Right lobe of liver (tissue), 6 donors: ENCODE measurements at regions of chr6 and their contacts with region 1.

Region 1: DNA sequence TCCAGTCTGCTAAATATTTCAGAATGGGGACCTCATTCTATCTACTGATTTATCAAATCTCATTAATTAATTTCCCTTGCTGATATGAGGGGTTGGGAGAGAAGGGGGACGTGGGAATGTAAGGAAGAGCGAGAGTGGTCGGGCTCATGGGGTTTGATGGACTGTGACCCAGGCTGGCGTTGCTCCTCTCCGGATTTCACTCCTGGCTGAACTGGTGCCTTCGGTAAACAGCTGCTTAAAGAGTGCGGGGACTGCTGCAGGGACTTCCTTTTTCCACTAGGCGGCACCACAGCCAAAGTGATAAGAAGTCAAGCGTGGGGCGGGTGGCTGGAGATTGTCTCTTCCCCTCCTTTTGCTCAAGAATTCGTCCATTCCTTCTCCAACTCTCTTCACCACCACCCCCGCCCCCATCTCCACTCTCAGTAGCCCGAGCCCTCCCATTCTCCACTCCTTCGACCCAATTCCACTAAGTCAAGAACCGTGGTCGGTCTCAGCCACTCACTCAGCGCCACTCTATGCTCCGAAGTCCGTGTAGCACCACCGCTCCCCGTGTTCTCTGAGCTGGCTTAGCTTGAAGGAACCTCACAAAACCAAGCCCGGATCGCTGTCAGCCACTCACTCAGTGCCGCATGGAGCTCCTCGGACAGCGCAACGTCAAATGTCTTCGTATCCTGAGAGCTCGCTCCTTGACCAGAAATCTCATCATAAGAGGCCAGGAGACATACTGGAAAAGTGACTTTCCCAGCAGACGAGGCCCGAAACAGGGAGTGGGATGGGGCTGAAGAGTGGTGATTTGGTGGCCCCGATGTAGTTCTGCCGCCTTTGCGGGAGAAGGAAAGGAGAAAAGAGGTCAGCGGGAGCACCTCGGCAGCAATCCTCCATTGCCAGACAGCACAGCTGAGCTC is 9.7 kb downstream of the TRIM31 start:
- DNase-seq: peak; percentile 80 to 88 (median 84)
- ATAC-seq: peak; percentile 76 to 87 (median 84)
- H3K4me3 ChIP-seq: peak overlapping the region; percentile 22 to 47 (median 34)
- H3K27ac ChIP-seq: peak overlapping the region; percentile 18 to 55 (median 27)
- H3K4me1 ChIP-seq: peaks cover 0 to 25% (median 2%) of the 10 kb centered on the region in 4 donors
- H3K27me3 ChIP-seq: peaks cover 0 to 3% of the 10 kb centered on the region in 2 donors
- CTCF ChIP-seq: peak; percentile 82 to 93 (median 89)
- POLR2A ChIP-seq: no peak

Region 2: DNA sequence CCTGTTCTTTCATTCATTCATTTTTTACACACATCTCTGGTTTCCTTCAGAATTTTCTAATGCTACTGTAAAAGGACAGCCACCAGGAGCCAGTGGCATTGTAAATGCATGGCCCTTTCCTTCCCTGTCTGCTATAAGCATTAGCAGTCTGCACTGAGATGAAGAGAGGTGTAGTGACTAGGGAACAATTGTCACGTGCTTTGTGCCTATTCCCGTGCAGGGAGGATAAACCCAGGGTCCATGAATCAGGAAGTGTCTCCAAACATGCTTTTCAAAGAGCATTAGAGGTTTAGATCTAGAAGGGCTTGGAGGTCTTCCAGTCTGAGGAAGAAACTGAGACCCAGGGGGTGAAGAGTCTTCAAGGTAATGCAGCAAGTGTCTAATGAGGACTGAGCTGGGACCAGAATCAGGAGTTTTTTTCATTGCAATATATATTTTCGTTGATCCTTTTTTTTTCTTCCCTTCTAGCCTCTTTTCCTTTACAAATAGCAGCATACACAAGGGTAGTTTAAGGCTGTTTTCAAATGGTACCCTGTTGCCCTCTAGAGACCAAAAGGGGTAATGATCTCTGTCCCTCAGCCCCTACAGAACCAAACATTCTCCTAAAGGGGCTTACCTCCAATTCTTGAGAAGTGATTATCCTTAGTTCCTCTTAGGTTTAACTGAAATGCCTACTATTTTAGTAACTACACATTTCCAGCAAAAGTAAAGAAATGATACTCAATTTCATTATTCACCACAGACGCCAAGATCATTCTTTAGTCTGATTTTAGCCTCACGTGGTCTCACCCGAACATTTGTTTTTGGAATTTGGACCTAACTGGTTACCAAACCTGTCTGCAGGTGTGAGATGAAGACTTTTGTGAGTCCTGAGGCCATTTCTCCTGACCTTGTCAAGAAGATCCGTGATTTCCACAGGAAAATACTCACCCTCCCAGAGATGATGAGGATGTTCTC is 66.7 kb after region 1 on chr6:
- intact Hi-C with region 1: loop called in 1 of 2 experiments (anchors 10 kb)
- DNase-seq: no peak
- ATAC-seq: peak; percentile 88 to 92 (median 90)
- H3K4me3 ChIP-seq: no peak overlapping the region
- H3K27ac ChIP-seq: no peak overlapping the region
- H3K4me1 ChIP-seq: no peaks in the 10 kb centered on the region
- H3K27me3 ChIP-seq: no peaks in the 10 kb centered on the region
- CTCF ChIP-seq: peak; percentile 77 to 82 (median 79)
- POLR2A ChIP-seq: peak; percentile 7